Prostate gland (tissue), 2 donors: ENCODE measurements at regions of chr9 and their contacts with region 1.

Region 1: GRCh38 chr9:124852829-124853531 is at the start of gene WDR38:
- DNase-seq: peak; percentile 67
- H3K4me3 ChIP-seq: peak within 1 kb of the TSS; percentile 30 to 34
- H3K27ac ChIP-seq: peak within 1 kb of the TSS in 1 of 2 donors; percentile 4
- H3K4me1 ChIP-seq: peaks cover 4% of the 10 kb centered on the region
- H3K27me3 ChIP-seq: no peaks in the 10 kb centered on the region
- CTCF ChIP-seq: peak; percentile 96 to 100 (median 97)
- POLR2A ChIP-seq: no peak
- total RNA-seq, gene WDR38: not detected

Region 2: GRCh38 chr9:125374443-125375309 is 521.7 kb after region 1 on chr9:
- intact Hi-C with region 1: loop called (anchors 10 kb)
- DNase-seq: peak; percentile 42
- H3K4me3 ChIP-seq: no peak overlapping the region
- H3K27ac ChIP-seq: no peak overlapping the region
- H3K4me1 ChIP-seq: no peaks in the 10 kb centered on the region
- H3K27me3 ChIP-seq: no peaks in the 10 kb centered on the region
- CTCF ChIP-seq: peak; percentile 44 to 82 (median 70)
- POLR2A ChIP-seq: no peak